ENCODE measurements at regions of chr3 and their contacts with region 1.

Region 1: DNA sequence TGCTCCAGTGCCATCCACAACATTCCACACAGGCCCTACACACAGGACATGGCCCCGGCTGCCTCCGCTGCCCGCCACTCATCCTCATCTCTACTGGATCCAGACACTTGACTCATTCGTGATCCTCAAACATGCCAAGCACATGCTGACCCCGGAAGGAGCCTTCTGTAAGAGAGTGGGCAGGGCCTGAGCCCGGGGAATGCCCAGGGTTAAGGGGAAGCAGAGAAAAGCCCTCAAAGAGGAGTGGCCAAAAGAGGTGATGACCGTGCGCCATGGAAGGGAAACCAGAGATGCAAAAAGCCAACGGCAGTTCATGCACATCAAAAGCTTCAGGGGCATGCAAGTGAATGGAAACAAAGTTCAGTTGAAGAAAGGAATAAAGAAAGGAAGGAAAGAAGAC is 46.1 kb downstream of the RFTN1 start:
- DNase-seq: peak; percentile 78
- ATAC-seq: peak; percentile 79
- H3K4me3 Mint-ChIP-seq: peak overlapping the region; percentile 50
- H3K27ac Mint-ChIP-seq: peak overlapping the region; percentile 92
- H3K4me1 Mint-ChIP-seq: peaks cover 66% of the 10 kb centered on the region
- H3K27me3 Mint-ChIP-seq: no peaks in the 10 kb centered on the region

Region 2: DNA sequence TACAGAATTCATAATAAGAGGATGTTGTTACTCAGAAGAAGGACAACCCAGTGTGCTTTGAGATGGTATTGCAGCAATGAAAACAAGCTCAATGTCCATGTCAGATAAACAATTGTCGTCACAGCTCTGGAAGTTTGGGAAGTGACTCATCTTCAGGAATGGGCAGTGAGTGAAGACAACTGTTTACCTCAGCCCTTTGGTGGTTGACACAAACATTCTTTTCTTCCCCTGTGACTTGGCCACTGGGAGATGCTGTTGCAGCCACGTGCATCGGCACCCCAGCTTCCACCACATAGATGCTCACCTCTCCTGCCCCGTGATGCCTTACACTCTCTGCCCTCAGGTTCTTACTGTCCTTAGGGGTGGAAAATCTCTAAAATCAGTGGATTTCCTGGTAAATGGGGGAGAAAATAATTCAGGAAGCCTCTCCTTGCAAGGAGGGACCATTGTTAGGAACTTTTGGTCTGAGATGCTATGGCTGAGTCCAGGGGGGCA is 407.0 kb before region 1 on chr3:
- CTCF ChIA-PET with region 1: no interaction called
- POLR2A ChIA-PET with region 1: no interaction called
- intact Hi-C with region 1: no loop called
- DNase-seq: no peak
- ATAC-seq: no peak
- H3K4me3 Mint-ChIP-seq: no peak overlapping the region
- H3K27ac Mint-ChIP-seq: no peak overlapping the region
- H3K4me1 Mint-ChIP-seq: no peaks in the 10 kb centered on the region
- H3K27me3 Mint-ChIP-seq: peaks cover 2% of the 10 kb centered on the region

Region 3: DNA sequence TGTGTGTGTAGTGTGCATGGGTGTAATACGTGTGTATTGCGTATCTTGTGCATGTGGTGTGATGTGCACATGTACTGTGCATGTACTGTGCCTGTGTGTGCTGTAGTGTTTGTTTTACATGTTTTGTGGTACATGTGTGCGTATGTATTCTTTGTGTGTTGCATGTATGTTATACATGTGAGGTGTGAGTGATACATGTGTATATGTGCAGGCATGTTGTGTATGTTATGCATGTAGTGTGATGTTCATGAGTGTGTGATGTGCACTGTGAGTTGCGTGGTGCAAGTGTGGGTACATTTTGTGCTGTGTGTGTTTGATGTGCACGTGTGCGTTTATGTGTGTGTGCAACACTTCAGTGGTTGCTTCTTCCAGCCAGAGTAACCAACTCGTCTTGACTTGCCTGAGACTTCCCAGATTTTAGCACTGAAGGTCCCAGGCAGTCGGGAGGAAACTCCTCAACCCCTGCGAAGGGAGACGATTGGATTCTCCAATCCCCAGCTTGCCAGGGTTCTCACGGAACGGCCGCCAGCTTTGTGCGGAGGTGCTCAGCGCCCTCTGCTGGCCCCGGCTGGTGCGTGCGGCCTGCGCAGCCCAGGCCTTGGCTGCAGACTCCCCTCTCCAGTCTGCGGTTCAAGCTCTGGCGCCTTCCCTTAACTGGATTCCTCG is 289.3 kb before region 1 on chr3:
- CTCF ChIA-PET with region 1: no interaction called
- POLR2A ChIA-PET with region 1: no interaction called
- intact Hi-C with region 1: no loop called
- DNase-seq: peak; percentile 85
- ATAC-seq: peak; percentile 87
- H3K4me3 Mint-ChIP-seq: no peak overlapping the region
- H3K27ac Mint-ChIP-seq: no peak overlapping the region
- H3K4me1 Mint-ChIP-seq: no peaks in the 10 kb centered on the region
- H3K27me3 Mint-ChIP-seq: peaks cover 18% of the 10 kb centered on the region

Region 4: GRCh38 chr3:16349986-16350596 is 117.3 kb before region 1 on chr3:
- CTCF ChIA-PET with region 1: no interaction called
- POLR2A ChIA-PET with region 1: interaction called, 10 read pairs
- intact Hi-C with region 1: no loop called
- DNase-seq: no peak
- ATAC-seq: no peak
- H3K4me3 Mint-ChIP-seq: no peak overlapping the region
- H3K27ac Mint-ChIP-seq: peak overlapping the region; percentile 45
- H3K4me1 Mint-ChIP-seq: peaks cover 35% of the 10 kb centered on the region
- H3K27me3 Mint-ChIP-seq: no peaks in the 10 kb centered on the region

Measured in activated CD4-positive, alpha-beta T cell treated with anti-CD3 and anti-CD28 coated beads for 36 hours (primary cell).